Activated naive CD4-positive, alpha-beta T cell treated with anti-CD3 and anti-CD28 coated beads for 36 hours (primary cell): ENCODE measurements at regions of chr2 and their contacts with region 1.

Region 1: DNA sequence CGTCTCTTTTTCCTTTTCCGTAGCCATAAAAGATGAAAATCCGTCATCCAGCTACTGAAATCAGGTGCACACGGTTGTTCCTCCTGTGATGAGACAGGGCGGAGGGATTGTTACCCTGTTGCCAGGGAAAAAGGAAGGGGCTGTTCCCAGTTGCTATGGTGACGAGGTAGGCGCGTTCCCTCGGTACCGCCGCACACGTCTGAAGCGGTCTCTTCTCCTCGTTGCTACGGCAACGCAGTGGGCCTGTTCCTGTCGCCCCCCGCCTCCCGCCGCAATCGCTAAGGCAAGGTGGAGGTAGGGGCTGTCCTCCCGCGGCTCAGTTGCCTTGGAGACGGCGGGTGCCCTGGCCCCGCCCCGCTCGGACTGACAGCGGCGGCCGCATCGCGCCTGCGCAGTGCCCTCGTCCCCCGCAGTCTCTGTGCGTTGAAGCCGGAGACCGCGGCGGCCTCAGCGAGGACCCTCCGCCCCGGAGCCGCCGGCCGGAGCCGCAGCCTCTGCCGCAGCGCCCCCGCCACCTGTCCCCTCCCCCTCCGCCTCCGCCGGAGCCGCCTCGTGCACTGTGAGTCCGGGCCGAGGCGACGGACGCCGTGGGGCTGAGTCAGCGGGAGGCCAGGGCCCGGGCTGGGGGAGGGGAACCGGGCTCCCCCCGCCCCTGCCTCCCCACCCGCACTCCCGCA is at the start of gene MAPRE3:
- DNase-seq: peak; percentile 75
- H3K4me3 Mint-ChIP-seq: peak within 1 kb of the TSS; percentile 77
- H3K27ac Mint-ChIP-seq: peak within 1 kb of the TSS; percentile 43
- H3K4me1 Mint-ChIP-seq: peaks cover 19% of the 10 kb centered on the region
- H3K27me3 Mint-ChIP-seq: peaks cover 6% of the 10 kb centered on the region
- total RNA-seq, gene MAPRE3: 2.9 to 3.8 TPM

Region 2: DNA sequence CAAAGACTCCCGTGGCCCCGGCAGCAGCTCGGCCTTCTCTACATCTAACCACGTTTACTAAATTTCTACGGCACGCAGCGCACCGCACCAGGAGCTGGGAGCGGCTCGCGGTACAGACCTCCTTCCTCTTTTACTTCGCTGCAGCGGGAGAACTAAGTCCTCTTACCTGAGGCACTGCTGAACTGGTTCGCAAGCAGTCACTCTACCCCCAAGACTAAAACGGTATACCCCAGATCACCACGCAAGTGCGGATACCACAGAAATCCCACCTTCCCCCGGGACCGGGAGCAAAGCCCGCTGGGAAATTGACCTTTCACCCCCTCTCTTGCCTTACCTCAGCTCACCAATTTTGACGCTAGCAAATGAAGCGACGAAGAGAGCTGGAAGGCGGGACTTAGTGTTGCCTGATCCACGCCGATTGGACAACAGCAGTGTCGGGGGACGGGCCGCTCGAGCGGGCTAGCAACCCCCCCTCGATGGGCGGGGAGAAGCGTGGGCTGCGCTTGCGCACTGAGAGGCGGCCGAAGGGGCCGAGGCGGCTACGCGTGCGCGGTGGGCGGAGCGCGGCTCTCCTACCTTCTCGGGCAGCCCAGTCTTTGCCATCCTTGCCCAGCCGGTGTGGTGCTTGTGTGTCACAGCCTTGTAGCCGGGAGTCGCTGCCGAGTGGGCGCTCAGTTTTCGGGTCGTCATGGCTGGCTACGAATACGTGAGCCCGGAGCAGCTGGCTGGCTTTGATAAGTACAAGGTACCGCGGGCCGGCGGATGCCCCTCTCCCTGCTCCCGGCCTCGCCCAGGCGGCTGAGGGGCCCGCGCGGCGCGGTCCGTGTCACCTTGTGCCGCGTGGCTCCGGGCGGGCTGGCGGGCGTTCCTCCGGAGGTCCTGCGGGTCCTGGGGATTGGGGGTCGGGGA is 624.6 kb before region 1 on chr2 and contains the start of gene SELENOI:
- CTCF ChIA-PET with region 1: no interaction called
- intact Hi-C with region 1: loop called (anchors 2 kb)
- DNase-seq: peak; percentile 99
- H3K4me3 Mint-ChIP-seq: peak within 1 kb of the TSS; percentile 90
- H3K27ac Mint-ChIP-seq: peak within 1 kb of the TSS; percentile 94
- H3K4me1 Mint-ChIP-seq: peaks cover 27% of the 10 kb centered on the region
- H3K27me3 Mint-ChIP-seq: no peaks in the 10 kb centered on the region
- total RNA-seq, gene SELENOI: 20.0 to 22.9 TPM

Region 3: DNA sequence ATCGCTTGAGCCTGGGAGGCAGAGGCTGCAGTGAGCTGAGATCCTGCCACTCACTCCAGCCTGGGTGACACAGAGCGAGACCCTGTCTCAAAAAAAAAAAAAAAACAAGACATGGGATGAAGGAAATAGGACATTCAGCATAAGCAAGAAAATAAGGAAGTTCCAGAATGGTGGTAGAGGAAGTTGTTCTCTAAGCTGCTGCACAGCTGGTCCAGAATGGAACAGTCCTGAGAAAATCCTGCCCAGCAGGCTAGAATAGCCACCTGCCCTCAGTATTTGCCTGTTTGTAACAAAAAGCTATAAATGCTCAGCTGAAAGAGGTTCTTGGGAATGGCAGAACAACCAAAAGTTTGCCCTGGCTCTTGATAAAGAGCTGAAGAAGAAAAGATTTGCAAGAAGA is 11.1 kb before region 1 on chr2:
- CTCF ChIA-PET with region 1: interaction called, 16 read pairs
- intact Hi-C with region 1: no loop called
- DNase-seq: no peak
- H3K4me3 Mint-ChIP-seq: no peak overlapping the region
- H3K27ac Mint-ChIP-seq: no peak overlapping the region
- H3K4me1 Mint-ChIP-seq: no peaks in the 10 kb centered on the region
- H3K27me3 Mint-ChIP-seq: peaks cover 12% of the 10 kb centered on the region

Region 4: GRCh38 chr2:27016801-27017325 is 46.5 kb after region 1 on chr2:
- CTCF ChIA-PET with region 1: interaction called, 16 read pairs
- intact Hi-C with region 1: no loop called
- DNase-seq: peak; percentile 70
- H3K4me3 Mint-ChIP-seq: no peak overlapping the region
- H3K27ac Mint-ChIP-seq: no peak overlapping the region
- H3K4me1 Mint-ChIP-seq: no peaks in the 10 kb centered on the region
- H3K27me3 Mint-ChIP-seq: no peaks in the 10 kb centered on the region

Region 5: DNA sequence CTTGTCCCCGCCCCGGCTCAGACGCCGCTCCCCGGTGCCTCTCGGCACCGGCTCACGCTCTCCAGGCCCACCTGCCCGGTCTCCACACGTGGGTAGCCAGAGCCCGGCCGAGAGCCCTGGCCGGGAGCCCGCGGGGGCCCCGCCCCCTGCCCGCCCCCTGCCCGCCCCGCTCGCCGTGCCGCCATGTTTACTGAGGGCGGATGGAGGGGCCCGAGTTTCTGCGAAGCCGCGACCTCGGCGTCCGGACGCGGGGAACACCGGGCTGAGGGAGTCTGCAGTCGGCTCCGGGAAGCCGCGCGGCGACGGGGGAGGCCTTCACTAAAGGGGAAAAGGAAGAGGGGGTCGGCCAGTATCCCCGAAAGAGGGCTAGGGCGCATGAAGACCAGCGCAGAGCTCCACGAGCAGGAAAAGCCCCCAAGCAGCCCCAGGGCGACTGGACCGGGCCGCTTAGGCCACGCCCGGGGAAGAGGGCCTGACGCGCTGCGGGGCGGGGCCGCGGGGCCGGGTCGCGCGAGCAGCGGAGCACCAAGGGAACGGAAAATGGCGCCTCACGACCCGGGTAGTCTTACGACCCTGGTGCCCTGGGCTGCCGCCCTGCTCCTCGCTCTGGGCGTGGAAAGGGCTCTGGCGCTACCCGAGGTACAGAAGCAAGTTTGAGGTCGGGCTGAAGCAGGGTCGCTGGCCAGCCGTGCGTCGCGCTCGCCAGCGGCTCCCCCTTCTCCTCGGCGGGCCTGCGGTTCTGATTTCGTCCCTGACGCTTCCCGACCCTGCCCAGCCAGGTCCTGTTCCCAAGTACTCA is 241.6 kb after region 1 on chr2 and contains the starts of genes ATRAID and SLC5A6:
- CTCF ChIA-PET with region 1: no interaction called
- intact Hi-C with region 1: loop called (anchors 5 kb)
- DNase-seq: peak; percentile 88
- H3K4me3 Mint-ChIP-seq: peak within 1 kb of the TSS; percentile 98
- H3K27ac Mint-ChIP-seq: peak within 1 kb of the TSS; percentile 99
- H3K4me1 Mint-ChIP-seq: peaks cover 29% of the 10 kb centered on the region
- H3K27me3 Mint-ChIP-seq: no peaks in the 10 kb centered on the region
- total RNA-seq, gene ATRAID: 80.5 to 80.8 TPM
- total RNA-seq, gene SLC5A6: 22.6 to 24.8 TPM